ENCODE measurements at regions of chr11 and their contacts with region 1.

Region 1: DNA sequence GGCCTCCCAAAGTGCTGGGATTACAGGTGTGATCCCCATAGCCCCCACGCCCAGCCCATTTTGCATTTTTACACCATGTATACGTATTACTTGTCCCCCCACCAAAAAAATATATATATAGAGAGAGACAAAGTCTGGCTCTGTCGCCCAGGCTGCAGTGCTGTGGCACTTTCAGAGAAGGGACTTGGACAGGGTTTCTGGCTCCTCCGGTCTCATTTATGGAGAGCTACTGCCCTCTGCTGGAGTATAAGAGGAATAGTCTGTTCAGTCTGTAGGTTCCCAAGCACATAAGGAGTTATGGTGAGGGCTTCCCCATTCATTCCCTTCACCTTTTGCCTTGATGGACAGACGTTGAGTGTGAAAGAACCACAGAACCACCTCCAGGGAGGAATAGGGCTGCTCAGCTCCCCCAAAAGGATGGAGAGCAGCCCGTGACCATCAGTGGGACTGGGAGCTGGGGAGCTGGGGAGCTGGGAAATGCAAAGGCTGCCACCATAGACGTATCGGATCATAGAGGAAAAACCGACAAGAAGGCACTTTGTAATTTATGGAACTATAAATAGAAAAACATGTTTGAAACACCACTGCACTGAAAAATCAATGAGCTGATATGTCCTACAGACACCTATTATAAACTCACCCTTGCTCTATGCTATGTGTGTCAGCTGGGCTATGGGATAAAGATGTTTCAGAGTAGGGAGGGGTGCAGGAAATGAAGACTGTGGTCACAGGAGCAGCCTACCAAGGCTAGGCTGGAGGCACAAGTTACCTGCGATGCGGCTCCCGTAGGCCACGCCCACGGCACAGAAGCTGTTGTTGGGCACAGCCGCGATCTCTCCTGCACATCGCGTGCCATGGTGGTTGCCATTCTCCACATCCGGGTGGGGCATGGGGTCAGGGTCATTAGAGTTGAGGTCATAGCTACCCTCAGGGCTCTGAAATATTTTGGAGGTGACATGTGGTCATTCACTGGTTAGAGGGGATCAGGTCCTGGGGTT is 5.2 kb downstream of the PCSK7 start:
- DNase-seq: peak; percentile 82
- CTCF ChIP-seq: peak; percentile 81

Region 2: GRCh38 chr11:116576526-116576925 is 650.2 kb before region 1 on chr11:
- CTCF ChIA-PET with region 1: no interaction called
- POLR2A ChIA-PET with region 1: no interaction called
- DNase-seq: no peak
- CTCF ChIP-seq: no peak

Region 3: GRCh38 chr11:116879800-116880625 is 346.7 kb before region 1 on chr11:
- CTCF ChIA-PET with region 1: interaction called, 14 read pairs
- POLR2A ChIA-PET with region 1: no interaction called
- DNase-seq: peak; percentile 68
- CTCF ChIP-seq: peak; percentile 64

Region 4: DNA sequence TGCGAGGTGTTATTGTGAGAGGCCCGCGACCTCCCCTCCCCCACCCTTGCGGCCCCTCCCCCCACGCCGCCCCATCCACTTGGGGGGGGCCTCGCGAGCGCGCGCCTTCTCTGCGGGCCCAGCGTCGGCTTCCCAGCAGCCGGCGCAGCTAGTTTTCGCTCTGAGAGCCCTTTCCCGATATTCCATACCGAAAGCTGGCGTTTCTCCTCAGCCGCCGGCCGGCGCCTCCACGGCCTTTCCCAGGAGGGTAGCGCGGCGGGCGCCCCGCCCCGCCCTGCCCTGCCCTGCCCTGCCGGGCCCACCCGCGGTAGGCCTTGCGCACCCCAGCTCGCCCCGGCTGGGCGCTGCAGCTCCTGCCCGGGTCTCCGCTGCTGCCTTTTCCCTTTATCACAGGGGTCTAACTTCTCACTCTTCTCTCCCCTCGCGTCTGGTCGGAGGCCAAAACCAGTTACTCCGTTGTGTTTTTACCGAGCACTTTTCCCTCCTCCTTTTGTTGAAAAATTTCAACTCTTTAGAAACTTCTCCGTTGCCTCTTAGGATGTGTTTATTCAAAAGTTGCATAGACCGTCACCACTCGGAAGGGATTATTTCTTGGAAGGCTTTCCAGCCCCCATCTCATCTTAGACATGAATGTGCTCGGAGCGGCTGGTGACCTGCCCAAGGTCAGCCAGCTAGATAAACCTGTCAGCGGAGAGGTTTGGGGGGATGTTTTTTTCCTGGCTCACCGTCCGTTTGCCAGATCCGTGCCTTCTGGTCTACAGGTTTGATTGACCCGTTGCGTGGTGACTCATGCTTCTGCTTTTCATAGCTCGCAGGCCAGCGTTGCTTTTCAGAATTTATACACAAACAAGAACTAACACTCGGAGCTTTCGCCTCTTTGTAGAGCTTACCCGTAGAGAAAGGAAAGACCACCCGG is 82.0 kb before region 1 on chr11:
- CTCF ChIA-PET with region 1: interaction called, 15 read pairs
- POLR2A ChIA-PET with region 1: interaction called, 3 read pairs
- DNase-seq: peak; percentile 73
- CTCF ChIP-seq: no peak

Region 5: DNA sequence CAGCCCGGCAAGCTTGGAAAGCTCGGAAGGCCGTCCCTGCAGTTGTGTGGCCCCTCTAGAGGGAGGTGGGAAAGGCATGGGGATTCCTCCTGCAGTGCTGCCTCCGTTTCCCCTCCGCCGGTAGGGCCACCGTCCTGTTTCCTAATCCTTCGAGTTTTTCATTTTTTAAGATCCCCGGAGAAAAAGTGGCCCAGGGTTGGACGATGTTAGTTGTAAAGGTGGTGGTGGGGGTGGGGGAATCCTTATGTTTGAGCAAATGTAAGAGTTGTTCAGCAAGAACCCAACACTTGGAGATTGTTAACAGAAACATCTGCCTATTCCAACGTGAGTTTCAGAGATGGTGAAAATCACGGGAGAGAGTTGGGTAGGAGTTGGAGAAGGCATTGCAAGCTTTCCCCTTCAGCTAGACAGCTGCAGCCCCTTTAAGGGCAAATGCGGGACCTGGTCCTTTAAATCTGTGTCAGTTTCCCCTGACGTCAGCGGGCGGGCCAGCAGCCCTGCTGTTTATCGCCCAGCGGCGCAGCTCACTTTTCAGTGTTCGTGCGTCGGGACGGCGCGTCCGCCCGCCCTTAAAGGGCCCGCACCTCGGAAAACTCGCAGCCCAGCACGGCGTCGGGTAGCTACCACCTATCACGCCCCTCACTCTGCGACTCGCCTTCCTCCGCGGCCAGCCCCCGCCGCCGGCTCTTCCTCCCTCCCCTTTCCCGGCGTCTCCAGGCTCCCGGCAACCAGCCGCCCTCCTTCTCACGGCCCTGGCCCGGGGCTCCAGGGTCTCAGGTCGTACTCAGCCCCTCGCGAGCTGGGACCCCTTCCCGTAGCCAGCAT is 48.3 kb before region 1 on chr11 and contains the start of gene SIDT2:
- CTCF ChIA-PET with region 1: interaction called, 118 read pairs
- POLR2A ChIA-PET with region 1: interaction called, 4 read pairs
- DNase-seq: peak; percentile 92
- CTCF ChIP-seq: no peak

Region 6: GRCh38 chr11:117210620-117211019 is 16.1 kb before region 1 on chr11:
- CTCF ChIA-PET with region 1: interaction called, 22 read pairs
- POLR2A ChIA-PET with region 1: no interaction called
- DNase-seq: no peak
- CTCF ChIP-seq: no peak

Region 7: DNA sequence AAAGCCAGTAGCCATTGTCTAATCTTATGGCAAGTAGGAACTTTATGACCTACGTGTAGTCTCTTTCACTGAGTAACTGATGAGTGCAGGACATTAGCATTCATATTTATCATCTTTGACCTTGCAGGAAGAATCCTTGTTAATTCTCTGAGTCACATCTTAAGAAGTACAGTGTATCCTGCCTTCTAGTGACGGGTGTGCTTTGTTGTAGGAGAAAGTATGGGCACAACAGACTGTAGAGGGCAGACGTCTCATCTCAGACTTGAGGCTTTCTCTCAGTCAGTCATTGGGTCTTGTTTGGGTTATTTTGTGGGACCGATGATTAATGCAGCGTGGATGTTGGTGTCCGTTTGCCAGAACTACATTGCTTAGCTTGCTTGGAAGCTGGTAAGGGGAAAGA is 12.6 kb after region 1 on chr11:
- CTCF ChIA-PET with region 1: interaction called, 19 read pairs
- POLR2A ChIA-PET with region 1: no interaction called
- DNase-seq: no peak
- CTCF ChIP-seq: no peak

Region 8: GRCh38 chr11:117597071-117597470 is 370.4 kb after region 1 on chr11:
- CTCF ChIA-PET with region 1: no interaction called
- POLR2A ChIA-PET with region 1: no interaction called
- DNase-seq: peak; percentile 48
- CTCF ChIP-seq: no peak

Measured in GM10248 (cell line).